ENCODE measurements at regions of chr1 and their contacts with region 1.

Region 1: GRCh38 chr1:10941891-10942541 is 70.4 kb upstream of the TARDBP start:
- DNase-seq: peak; percentile 38 to 78 (median 56)
- ATAC-seq: peak; percentile 71
- H3K4me3 ChIP-seq: no peak overlapping the region
- H3K4me3 Mint-ChIP-seq: peak overlapping the region; percentile 20
- H3K27ac ChIP-seq: no peak overlapping the region
- H3K27ac Mint-ChIP-seq: no peak overlapping the region
- H3K4me1 ChIP-seq: peaks cover 42% of the 10 kb centered on the region
- H3K4me1 Mint-ChIP-seq: peaks cover 34% of the 10 kb centered on the region
- H3K27me3 ChIP-seq: peaks cover 8 to 14% of the 10 kb centered on the region in 2 experiments
- H3K27me3 Mint-ChIP-seq: peaks cover 53% of the 10 kb centered on the region
- CTCF ChIP-seq: peak; percentile 91

Region 2: GRCh38 chr1:10635085-10635896 is 306.7 kb before region 1 on chr1:
- CTCF ChIA-PET with region 1: no interaction called
- POLR2A ChIA-PET with region 1: no interaction called
- intact Hi-C with region 1: no loop called
- DNase-seq: no peak
- ATAC-seq: no peak
- H3K4me3 ChIP-seq: no peak overlapping the region
- H3K4me3 Mint-ChIP-seq: no peak overlapping the region
- H3K27ac ChIP-seq: no peak overlapping the region
- H3K27ac Mint-ChIP-seq: no peak overlapping the region
- H3K4me1 ChIP-seq: peaks cover 6% of the 10 kb centered on the region
- H3K4me1 Mint-ChIP-seq: no peaks in the 10 kb centered on the region
- H3K27me3 ChIP-seq: no peaks in the 10 kb centered on the region
- H3K27me3 Mint-ChIP-seq: no peaks in the 10 kb centered on the region
- CTCF ChIP-seq: no peak

Region 3: GRCh38 chr1:10867138-10867721 is 74.8 kb before region 1 on chr1:
- CTCF ChIA-PET with region 1: no interaction called
- POLR2A ChIA-PET with region 1: no interaction called
- intact Hi-C with region 1: loop called in 1 of 2 experiments (anchors 5 kb)
- DNase-seq: peak; percentile 39 to 82 (median 59)
- ATAC-seq: peak; percentile 85
- H3K4me3 ChIP-seq: peak overlapping the region; percentile 29
- H3K4me3 Mint-ChIP-seq: peak overlapping the region; percentile 6
- H3K27ac ChIP-seq: no peak overlapping the region
- H3K27ac Mint-ChIP-seq: no peak overlapping the region
- H3K4me1 ChIP-seq: peaks cover 16% of the 10 kb centered on the region
- H3K4me1 Mint-ChIP-seq: peaks cover 25% of the 10 kb centered on the region
- H3K27me3 ChIP-seq: peaks cover 40 to 41% of the 10 kb centered on the region in 2 experiments
- H3K27me3 Mint-ChIP-seq: peaks cover 71% of the 10 kb centered on the region
- CTCF ChIP-seq: peak; percentile 48

Region 4: DNA sequence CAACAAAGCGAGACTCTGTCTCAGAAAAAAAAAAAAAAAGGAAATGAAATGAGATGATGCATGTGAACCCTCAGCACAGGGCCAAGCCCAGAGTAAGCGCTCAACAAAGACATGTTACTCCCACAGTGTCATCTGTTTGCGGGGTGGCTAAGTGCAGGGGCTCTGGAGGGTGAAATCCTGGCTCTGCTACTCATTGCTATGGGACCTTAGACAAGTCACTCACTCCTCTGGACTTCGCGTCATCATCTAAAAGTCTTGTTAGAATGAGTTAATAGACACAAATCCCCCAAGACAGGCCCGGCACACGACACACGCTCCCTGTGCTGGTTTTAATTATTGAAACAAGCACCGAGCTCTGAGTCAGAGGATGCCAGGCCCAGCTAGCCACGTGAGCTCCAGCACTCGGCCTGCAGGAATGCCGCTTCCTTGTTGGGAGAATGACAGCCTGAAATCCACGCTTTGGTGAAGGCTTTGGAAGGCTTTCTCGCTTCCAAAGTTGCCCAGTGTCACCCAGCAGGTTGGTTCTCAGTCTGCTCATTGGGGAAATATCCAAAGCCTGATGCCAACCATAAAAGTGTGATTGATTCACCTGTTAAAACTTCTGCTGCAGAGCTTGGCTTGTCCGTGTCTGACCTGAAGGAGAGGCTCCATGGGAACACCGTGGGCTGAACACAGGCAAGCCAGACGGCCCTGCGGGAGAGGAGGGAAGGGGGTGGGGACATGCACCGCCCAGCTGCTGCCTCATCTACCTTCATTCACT is 33.7 kb after region 1 on chr1:
- CTCF ChIA-PET with region 1: no interaction called
- POLR2A ChIA-PET with region 1: no interaction called
- intact Hi-C with region 1: no loop called
- DNase-seq: no peak
- ATAC-seq: no peak
- H3K4me3 ChIP-seq: no peak overlapping the region
- H3K4me3 Mint-ChIP-seq: no peak overlapping the region
- H3K27ac ChIP-seq: no peak overlapping the region
- H3K27ac Mint-ChIP-seq: no peak overlapping the region
- H3K4me1 ChIP-seq: no peaks in the 10 kb centered on the region
- H3K4me1 Mint-ChIP-seq: no peaks in the 10 kb centered on the region
- H3K27me3 ChIP-seq: peaks cover 0 to 7% of the 10 kb centered on the region in 2 experiments
- H3K27me3 Mint-ChIP-seq: peaks cover 24% of the 10 kb centered on the region
- CTCF ChIP-seq: no peak